Posterior cingulate gyrus (tissue), 11 donors: ENCODE measurements at regions of chr5 and their contacts with region 1.

Region 1: DNA sequence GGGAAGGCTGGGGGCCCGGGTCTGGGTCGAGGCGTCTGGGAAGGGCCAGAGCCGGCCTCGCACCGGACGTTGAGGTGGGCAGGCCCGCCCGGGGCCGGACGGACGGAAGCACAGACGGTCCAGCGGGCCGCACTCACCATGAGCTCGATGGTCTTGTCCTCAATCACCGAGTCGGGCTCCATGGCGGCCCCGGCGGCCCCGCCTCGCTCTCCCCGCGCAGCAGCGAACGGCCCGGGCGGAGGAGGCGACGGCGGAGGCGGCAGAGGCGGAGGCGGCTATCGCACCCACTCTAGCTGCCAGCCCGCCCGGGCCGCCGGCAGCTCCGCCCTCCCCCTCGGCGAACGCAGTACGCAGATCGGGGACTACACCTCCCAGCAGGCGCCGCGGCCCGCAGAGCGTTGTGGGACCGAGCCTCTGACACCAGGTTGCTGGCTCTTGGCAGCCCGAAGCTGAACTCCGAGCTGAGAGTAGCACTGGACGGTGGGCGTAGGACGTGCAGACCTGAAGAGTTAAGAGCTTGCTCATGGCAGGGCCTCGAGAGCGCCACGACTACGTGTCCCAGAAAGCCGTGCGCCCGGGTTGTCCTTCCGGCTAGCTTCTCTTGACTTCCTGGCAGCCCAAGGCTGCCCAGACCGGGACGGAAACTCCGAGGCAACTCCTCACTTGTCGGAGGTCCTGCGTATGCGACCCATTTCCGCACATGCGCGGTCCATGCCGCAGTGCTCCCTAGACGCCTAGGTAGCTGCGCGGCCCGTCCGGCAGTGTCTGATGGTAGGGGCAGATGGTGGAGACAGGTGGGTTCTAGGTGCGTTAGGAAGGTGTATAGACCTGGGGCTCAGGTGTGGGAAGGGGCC is at the start of gene FBXW11:
- DNase-seq: peak; percentile 95 to 100 (median 98)

Region 2: DNA sequence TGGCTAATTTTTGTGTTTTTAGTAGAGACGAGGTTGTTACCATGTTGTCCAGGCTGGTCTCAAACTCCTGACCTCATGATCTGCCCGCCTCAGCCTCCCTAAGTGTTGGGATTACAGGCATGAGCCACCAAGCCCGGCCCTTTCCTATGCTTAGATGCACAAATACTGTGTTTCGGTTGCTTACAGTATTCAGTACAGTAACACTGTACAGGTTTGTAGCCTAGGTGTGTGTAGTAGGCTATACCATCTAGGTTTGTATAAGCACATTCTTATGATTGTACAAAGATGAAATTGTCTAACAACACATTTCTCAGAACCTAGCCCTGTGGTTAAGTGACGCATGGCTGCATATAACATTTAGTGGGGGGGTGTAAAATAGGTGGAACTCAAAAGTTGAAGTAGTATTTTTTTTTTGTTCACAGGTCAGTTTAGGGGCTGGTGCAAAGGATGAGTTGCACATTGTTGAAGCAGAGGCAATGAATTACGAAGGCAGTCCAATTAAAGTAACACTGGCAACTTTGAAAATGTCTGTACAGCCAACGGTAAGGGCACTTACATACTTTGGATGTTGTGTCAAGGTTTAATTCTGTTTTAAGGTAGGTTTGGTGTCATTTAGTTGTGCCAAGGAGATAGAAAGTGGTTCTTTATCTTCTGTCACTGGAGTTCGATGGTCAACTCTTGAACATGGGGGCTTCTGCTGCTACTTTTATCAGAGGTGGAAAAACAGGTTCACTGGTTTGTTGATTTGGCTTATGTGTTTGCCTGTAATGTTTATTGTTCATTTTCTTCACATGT is 615.5 kb before region 1 on chr5:
- intact Hi-C with region 1: loop called (anchors 10 kb)
- DNase-seq: peak in 1 of 10 donors; percentile 17

Region 3: GRCh38 chr5:171913987-171914273 is 92.6 kb before region 1 on chr5:
- intact Hi-C with region 1: loop called (anchors 5 kb)
- DNase-seq: no peak

Region 4: GRCh38 chr5:172150514-172151425 is 144.2 kb after region 1 on chr5:
- intact Hi-C with region 1: no loop called
- DNase-seq: peak in 4 of 10 donors; percentile 23 to 87 (median 46)